MCF 10A (cell line): ENCODE measurements at regions of chr17 and their contacts with region 1.

Region 1: GRCh38 chr17:63984651-63985386 is 12.1 kb upstream of the SCN4A start:
- DNase-seq: peak; percentile 73
- H3K4me3 Mint-ChIP-seq: no peak overlapping the region
- H3K27ac Mint-ChIP-seq: peak overlapping the region; percentile 33
- H3K4me1 Mint-ChIP-seq: peaks cover 9% of the 10 kb centered on the region
- H3K27me3 Mint-ChIP-seq: peaks cover 7% of the 10 kb centered on the region
- CTCF ChIP-seq: no peak

Region 2: GRCh38 chr17:63946440-63947367 is 38.1 kb before region 1 on chr17:
- CTCF ChIA-PET with region 1: interaction called, 11 read pairs
- POLR2A ChIA-PET with region 1: no interaction called
- intact Hi-C with region 1: no loop called
- DNase-seq: peak; percentile 35
- H3K4me3 Mint-ChIP-seq: no peak overlapping the region
- H3K27ac Mint-ChIP-seq: no peak overlapping the region
- H3K4me1 Mint-ChIP-seq: no peaks in the 10 kb centered on the region
- H3K27me3 Mint-ChIP-seq: no peaks in the 10 kb centered on the region
- CTCF ChIP-seq: peak; percentile 82

Region 3: DNA sequence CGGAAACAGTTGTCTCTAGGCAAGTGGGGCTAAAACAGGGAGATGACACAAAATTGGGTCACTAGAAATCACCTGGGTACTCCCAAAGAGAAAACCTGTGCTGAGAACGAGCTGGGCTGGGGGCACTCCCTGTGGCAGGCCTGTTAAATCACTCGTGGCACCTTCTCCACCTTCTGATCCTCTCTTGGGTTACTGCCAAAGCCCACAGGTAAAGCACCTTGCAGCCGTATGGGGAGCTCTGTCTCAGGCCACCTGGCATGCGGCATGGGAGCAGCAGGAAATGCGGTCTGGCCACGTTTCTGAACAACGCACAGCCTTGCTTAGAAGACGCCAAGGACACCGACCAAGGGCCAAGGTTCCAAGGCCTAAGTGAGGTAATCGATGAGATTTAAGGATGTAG is 57.1 kb after region 1 on chr17:
- CTCF ChIA-PET with region 1: no interaction called
- POLR2A ChIA-PET with region 1: no interaction called
- intact Hi-C with region 1: no loop called
- DNase-seq: no peak
- H3K4me3 Mint-ChIP-seq: no peak overlapping the region
- H3K27ac Mint-ChIP-seq: no peak overlapping the region
- H3K4me1 Mint-ChIP-seq: no peaks in the 10 kb centered on the region
- H3K27me3 Mint-ChIP-seq: no peaks in the 10 kb centered on the region
- CTCF ChIP-seq: no peak